GM12878 (cell line): ENCODE measurements at regions of chr3 and their contacts with region 1.

Region 1: GRCh38 chr3:140941434-140942220 is at the start of gene SLC25A36:
- DNase-seq: peak; percentile 98
- ATAC-seq: peak; percentile 95
- H3K4me3 ChIP-seq: peak within 1 kb of the TSS; percentile 94
- H3K27ac ChIP-seq: peak within 1 kb of the TSS; percentile 79
- H3K4me1 ChIP-seq: peaks cover 3% of the 10 kb centered on the region; the same call in 1 of the 2 replicates
- H3K27me3 ChIP-seq: no peaks in the 10 kb centered on the region
- CTCF ChIP-seq: peak in 2 of 3 experiments; percentile 4 to 6; a peak in 2 of 6 replicates
- EP300 ChIP-seq: peak in 1 of 2 experiments; percentile 49; a peak in 2 of 4 replicates
- POLR2A ChIP-seq: peak; percentile 99
- RAD21 ChIP-seq: no peak
- polyA plus RNA-seq, gene SLC25A36: 13.0 to 14.0 TPM

Region 2: GRCh38 chr3:140677764-140678163 is 263.9 kb before region 1 on chr3 and contains the start of gene TRIM42:
- CTCF ChIA-PET with region 1: no interaction called
- POLR2A ChIA-PET with region 1: no interaction called
- RAD21 ChIA-PET with region 1: no interaction called
- SMC1A ChIA-PET with region 1: no interaction called
- in situ Hi-C with region 1: no loop called
- intact Hi-C with region 1: no loop called
- DNase-seq: no peak
- ATAC-seq: no peak
- H3K4me3 ChIP-seq: no peak within 1 kb of the TSS
- H3K27ac ChIP-seq: no peak within 1 kb of the TSS
- H3K4me1 ChIP-seq: no peaks in the 10 kb centered on the region
- H3K27me3 ChIP-seq: 0 out of 4 replicates have a peak, but pooled peaks cover 0 to 3% of the 10 kb centered on the region in 2 experiments
- CTCF ChIP-seq: no peak
- EP300 ChIP-seq: no peak
- POLR2A ChIP-seq: no peak
- RAD21 ChIP-seq: no peak
- polyA plus RNA-seq, gene TRIM42: not detected

Region 3: GRCh38 chr3:140953028-140953960 is 11.7 kb after region 1 on chr3:
- CTCF ChIA-PET with region 1: interaction called, 13 read pairs
- POLR2A ChIA-PET with region 1: interaction called, 9 read pairs
- RAD21 ChIA-PET with region 1: interaction called, 3 read pairs
- SMC1A ChIA-PET with region 1: interaction called, 22 read pairs
- in situ Hi-C with region 1: no loop called
- intact Hi-C with region 1: no loop called
- DNase-seq: no peak
- ATAC-seq: peak; percentile 72
- H3K4me3 ChIP-seq: no peak overlapping the region
- H3K27ac ChIP-seq: no peak overlapping the region
- H3K4me1 ChIP-seq: no peaks in the 10 kb centered on the region; the same call in 1 of the 2 replicates
- H3K27me3 ChIP-seq: no peaks in the 10 kb centered on the region
- CTCF ChIP-seq: no peak
- EP300 ChIP-seq: no peak
- POLR2A ChIP-seq: no peak
- RAD21 ChIP-seq: no peak

Region 4: GRCh38 chr3:140972833-140973232 is 31.2 kb after region 1 on chr3:
- CTCF ChIA-PET with region 1: interaction called, 14 read pairs
- POLR2A ChIA-PET with region 1: no interaction called
- RAD21 ChIA-PET with region 1: no interaction called
- SMC1A ChIA-PET with region 1: interaction called, 7 read pairs
- in situ Hi-C with region 1: no loop called
- intact Hi-C with region 1: no loop called
- DNase-seq: no peak
- ATAC-seq: peak; percentile 74
- H3K4me3 ChIP-seq: no peak overlapping the region
- H3K27ac ChIP-seq: no peak overlapping the region
- H3K4me1 ChIP-seq: no peaks in the 10 kb centered on the region
- H3K27me3 ChIP-seq: no peaks in the 10 kb centered on the region
- CTCF ChIP-seq: peak; percentile 22 to 44 (median 23); a peak in 2 of 6 replicates
- EP300 ChIP-seq: no peak
- POLR2A ChIP-seq: no peak
- RAD21 ChIP-seq: no peak

Region 5: GRCh38 chr3:141020143-141020830 is 78.7 kb after region 1 on chr3:
- CTCF ChIA-PET with region 1: no interaction called
- POLR2A ChIA-PET with region 1: no interaction called
- RAD21 ChIA-PET with region 1: no interaction called
- SMC1A ChIA-PET with region 1: no interaction called
- in situ Hi-C with region 1: no loop called
- intact Hi-C with region 1: no loop called
- DNase-seq: no peak
- ATAC-seq: no peak
- H3K4me3 ChIP-seq: no peak overlapping the region
- H3K27ac ChIP-seq: no peak overlapping the region
- H3K4me1 ChIP-seq: no peaks in the 10 kb centered on the region
- H3K27me3 ChIP-seq: no peaks in the 10 kb centered on the region; a peak in 1 of 4 replicates
- CTCF ChIP-seq: no peak
- EP300 ChIP-seq: no peak
- POLR2A ChIP-seq: no peak
- RAD21 ChIP-seq: no peak